ENCODE measurements at regions of chr6 and their contacts with region 1.

Region 1: GRCh38 chr6:123965894-123966293 is 162.2 kb downstream of the NKAIN2 start:
- DNase-seq: no peak
- ATAC-seq: peak; percentile 40 to 42
- H3K4me3 ChIP-seq: no peak overlapping the region
- H3K27ac ChIP-seq: no peak overlapping the region
- H3K4me1 ChIP-seq: no peaks in the 10 kb centered on the region
- H3K27me3 ChIP-seq: no peaks in the 10 kb centered on the region

Region 2: GRCh38 chr6:123802697-123803496 is 163.0 kb before region 1 on chr6:
- intact Hi-C with region 1: loop called in 1 of 4 experiments (anchors 10 kb)
- DNase-seq: peak; percentile 73 to 92 (median 89)
- ATAC-seq: peak; percentile 96
- H3K4me3 ChIP-seq: peak overlapping the region; percentile 74
- H3K27ac ChIP-seq: no peak overlapping the region
- H3K4me1 ChIP-seq: no peaks in the 10 kb centered on the region
- H3K27me3 ChIP-seq: no peaks in the 10 kb centered on the region

Measured in right cardiac atrium (tissue), 5 donors.